ENCODE measurements at regions of chr1 and their contacts with region 1.

Region 1: DNA sequence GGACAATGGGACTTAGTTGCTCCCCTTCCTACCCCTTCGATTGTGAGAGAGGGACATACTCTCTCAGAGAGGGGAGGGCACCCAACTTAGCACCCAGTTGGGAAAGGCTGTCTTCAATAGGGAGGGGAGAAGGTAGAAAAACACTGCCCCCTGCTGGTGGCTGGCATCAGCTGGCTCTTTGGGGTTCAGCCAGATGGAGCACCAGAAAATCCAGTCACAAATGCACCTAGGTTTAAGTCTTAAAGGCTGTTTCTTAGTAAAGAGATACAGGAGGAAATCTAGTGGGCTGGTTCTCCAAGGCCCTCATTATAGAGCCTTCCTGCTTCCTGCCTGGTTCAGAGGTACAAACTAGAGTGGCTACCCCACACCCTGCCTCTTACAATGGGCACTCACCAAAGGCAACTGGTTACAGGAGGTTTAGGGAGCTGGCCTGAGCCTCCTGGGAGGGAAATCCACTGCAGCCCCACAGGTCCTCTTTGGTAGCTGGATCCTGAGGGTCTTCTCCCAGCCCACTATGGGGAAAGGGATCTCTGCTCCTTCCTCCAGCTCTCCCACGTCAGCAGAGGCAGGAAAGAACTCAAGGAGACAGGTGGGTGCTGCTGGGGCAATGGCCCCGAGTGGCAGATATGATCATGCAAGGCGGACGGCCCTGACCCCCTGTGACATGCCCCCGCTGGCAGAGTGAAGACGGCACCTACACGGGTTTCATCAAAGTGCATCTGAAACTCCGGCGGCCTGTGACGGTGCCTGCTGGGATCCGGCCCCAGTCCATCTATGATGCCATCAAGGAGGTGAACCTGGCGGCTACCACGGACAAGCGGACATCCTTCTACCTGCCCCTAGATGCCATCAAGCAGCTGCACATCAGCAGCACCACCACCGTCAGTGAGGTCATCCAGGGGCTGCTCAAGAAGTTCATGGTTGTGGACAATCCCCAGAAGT is 28.3 kb downstream of the EIF2D start:
- DNase-seq: no peak
- H3K4me3 ChIP-seq: no peak overlapping the region
- CTCF ChIP-seq: peak; percentile 72

Region 2: DNA sequence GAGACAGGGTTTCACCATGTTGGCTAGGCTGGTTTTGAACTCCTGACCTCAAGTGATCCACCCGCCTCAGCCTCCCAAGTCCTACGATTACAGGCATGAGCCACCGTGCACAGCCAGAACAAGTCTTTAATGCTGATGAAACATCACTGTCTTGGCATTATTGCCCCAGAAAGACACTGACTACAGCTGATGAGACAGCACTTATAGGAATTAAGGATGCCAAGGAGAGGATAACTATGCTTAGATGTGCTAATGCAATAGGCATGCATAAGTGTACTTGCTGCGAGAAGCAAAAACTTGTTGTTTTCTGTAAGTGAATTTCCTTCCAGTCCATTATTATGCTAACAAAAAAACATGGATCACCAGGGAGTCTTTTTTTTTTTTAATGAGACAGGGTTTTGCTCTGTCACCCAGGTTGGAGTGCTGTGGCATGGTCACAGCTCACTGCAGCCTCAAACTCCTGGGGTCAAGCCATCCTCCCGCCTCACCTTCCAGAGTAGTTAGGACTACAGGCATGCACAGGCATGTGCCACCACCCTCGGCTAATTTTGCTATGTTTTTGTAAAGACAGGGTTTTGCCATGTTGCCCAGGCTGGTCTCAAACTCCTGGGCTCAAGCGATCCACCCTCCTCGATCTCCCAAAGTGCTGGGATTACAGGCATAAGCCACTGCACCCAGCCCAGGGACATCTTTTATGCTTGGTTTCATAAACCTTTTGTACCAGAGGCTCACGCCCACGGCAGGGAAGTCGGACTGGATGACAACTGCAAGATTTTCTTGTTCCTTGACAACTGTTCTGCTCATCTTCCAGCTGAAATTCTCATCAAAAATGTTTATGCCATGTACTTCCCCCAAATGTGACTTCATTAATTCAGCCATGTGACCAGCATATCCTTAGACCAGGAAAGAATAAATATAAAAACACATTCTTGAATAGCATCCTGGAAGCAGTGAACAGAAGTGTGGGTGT is 507.9 kb before region 1 on chr1:
- CTCF ChIA-PET with region 1: no interaction called
- POLR2A ChIA-PET with region 1: no interaction called
- DNase-seq: peak; percentile 56
- H3K4me3 ChIP-seq: no peak overlapping the region
- CTCF ChIP-seq: no peak

Region 3: GRCh38 chr1:206445116-206445515 is 138.9 kb before region 1 on chr1:
- CTCF ChIA-PET with region 1: no interaction called
- POLR2A ChIA-PET with region 1: no interaction called
- DNase-seq: no peak
- H3K4me3 ChIP-seq: no peak overlapping the region
- CTCF ChIP-seq: no peak

Region 4: DNA sequence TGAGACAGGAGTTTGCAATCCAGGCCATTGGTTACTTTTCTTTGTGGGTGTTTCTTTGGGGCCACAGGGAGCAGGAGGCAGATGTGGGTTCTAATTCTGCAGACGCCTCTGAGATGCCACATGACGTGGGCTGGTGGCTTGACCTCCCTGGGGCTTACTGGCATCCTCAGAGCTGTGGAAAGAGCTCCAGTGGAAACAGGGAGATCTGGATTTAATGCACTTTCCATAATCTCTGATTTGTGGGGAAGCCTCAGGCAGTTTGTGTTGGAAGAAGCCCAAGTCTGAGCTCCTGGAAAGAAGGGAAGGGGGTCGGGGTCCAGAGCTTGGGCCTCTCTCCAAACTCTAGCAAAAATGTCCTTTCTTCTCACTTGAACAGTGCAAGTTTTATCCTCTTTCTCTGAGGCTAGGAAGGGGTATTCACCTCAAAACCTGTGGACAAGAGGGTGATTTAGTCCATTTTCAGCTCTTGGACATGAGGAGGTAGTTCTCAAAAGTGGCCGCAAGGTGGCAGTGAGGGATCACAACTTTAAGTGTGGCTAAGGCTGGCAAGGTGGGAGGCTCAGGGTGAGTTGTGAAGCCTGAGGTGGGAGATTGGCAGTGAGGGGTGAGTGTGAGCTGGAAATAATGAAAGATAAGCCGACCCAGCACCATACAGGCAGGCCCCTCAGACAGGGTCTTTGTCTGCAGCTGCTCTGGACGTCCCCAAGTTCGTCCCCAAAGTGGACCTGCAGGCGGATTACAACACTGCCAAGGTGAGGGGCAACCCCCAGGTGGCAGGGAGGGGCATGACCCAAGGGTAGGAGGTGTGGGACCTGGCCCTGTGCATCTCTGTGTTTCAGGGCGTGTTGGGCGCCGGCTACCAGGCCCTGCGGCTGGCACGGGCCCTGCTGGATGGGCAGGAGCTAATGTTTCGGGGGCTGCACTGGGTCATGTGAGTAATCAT is 104.5 kb before region 1 on chr1:
- CTCF ChIA-PET with region 1: interaction called, 79 read pairs
- POLR2A ChIA-PET with region 1: no interaction called
- DNase-seq: no peak
- H3K4me3 ChIP-seq: no peak overlapping the region
- CTCF ChIP-seq: peak; percentile 70

Region 5: GRCh38 chr1:206537141-206537540 is 46.8 kb before region 1 on chr1:
- CTCF ChIA-PET with region 1: interaction called, 215 read pairs
- POLR2A ChIA-PET with region 1: no interaction called
- DNase-seq: no peak
- H3K4me3 ChIP-seq: no peak overlapping the region
- CTCF ChIP-seq: no peak

Region 6: GRCh38 chr1:206551986-206552326 is 32.0 kb before region 1 on chr1:
- CTCF ChIA-PET with region 1: interaction called, 215 read pairs
- POLR2A ChIA-PET with region 1: no interaction called
- DNase-seq: no peak
- H3K4me3 ChIP-seq: no peak overlapping the region
- CTCF ChIP-seq: no peak

Region 7: GRCh38 chr1:206563367-206564207 is 20.4 kb before region 1 on chr1:
- CTCF ChIA-PET with region 1: interaction called, 23 read pairs
- POLR2A ChIA-PET with region 1: no interaction called
- DNase-seq: no peak
- H3K4me3 ChIP-seq: no peak overlapping the region
- CTCF ChIP-seq: no peak

Region 8: GRCh38 chr1:206612129-206612876 is 28.3 kb after region 1 on chr1 and contains the start of gene EIF2D:
- CTCF ChIA-PET with region 1: interaction called, 20 read pairs
- POLR2A ChIA-PET with region 1: no interaction called
- DNase-seq: no peak
- H3K4me3 ChIP-seq: peak within 1 kb of the TSS; percentile 95
- CTCF ChIP-seq: peak; percentile 99

Region 9: GRCh38 chr1:206734499-206735142 is 150.6 kb after region 1 on chr1:
- CTCF ChIA-PET with region 1: no interaction called
- POLR2A ChIA-PET with region 1: no interaction called
- DNase-seq: no peak
- H3K4me3 ChIP-seq: no peak overlapping the region
- CTCF ChIP-seq: peak; percentile 70